T-cell (primary cell): ENCODE measurements at regions of chr17 and their contacts with region 1.

Region 1: DNA sequence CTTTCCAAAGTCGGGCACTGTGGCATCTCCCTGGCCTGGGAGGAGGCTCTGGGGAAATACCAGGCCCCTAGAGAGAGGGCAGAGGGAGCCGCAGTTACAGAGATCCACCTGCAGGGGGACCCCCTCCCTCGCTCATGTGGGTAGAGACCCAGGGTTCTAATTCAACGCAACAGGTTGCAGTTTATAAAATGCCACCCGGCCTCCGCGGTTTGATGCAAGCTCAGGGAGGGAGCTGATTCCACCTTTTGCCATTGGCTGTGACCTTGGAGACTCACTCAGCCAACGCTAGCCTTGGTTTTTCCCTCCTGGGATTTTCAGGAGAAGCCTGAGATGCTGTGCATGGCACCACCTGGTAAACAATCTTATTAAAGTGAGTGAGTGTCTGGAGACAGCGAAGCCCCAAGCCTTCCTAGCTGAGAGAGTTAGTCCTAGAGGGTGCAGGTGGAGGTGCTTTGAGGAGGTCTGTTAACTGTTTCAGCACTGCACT is 12.1 kb downstream of the TTLL6 start:
- DNase-seq: peak; percentile 14 to 77 (median 56)
- ATAC-seq: peak; percentile 71 to 84 (median 81)
- H3K4me3 ChIP-seq: no peak overlapping the region
- H3K4me3 Mint-ChIP-seq: no peak overlapping the region
- H3K27ac ChIP-seq: no peak overlapping the region
- H3K27ac Mint-ChIP-seq: no peak overlapping the region
- H3K4me1 ChIP-seq: peaks cover 0 to 4% of the 10 kb centered on the region in 2 experiments
- H3K4me1 Mint-ChIP-seq: peaks cover 0 to 2% (median 0%) of the 10 kb centered on the region in 3 donors
- H3K27me3 ChIP-seq: peaks cover 0 to 23% of the 10 kb centered on the region in 2 experiments
- H3K27me3 Mint-ChIP-seq: peaks cover 9 to 20% of the 10 kb centered on the region in 2 donors

Region 2: DNA sequence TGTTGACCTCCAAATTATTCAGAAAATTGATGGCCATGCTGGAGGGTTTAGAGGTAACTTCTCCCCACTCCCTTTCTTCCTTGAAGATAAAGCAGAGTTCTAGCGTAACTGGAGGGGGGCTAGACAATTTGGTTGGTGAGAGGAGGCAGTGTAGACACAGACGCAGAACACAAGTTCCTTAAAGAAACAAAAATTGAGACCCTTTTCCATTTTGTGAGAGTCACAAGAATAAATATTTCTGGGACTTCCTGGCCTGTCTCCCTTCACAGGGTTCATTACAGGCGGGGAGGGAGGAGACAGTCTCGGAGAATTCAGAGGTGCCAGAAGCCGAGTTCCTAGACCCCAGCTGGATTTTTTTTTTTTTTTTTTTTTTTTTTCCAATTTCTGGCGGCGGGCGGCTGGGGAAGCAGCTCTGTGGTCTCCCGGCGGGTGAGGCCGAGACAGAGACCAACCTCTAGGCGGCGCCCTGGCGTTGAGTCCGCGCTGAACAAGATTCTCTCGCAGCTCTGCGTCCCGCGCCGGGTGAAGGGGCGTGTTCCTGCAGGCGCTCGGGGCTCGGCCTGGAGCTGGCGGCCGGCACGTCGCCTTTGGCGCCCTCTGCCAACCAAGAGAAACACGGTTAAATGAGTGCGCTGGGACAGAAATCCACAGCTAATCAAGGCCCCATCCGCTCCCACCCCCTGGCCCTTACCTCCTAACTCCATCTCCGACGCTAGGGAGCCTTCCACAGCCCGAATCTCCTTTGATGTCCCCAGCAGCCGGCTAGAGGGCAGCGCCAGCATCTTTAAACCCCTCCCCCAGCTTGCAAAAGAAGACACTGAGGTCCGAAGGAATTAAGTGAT is 168.6 kb before region 1 on chr17:
- CTCF ChIA-PET with region 1: interaction called in 1 of 2 experiments, 10 read pairs
- POLR2A ChIA-PET with region 1: no interaction called
- DNase-seq: peak in 31 of 35 experiments; percentile 28 to 79 (median 60)
- ATAC-seq: peak; percentile 66 to 85 (median 80)
- H3K4me3 ChIP-seq: no peak overlapping the region
- H3K4me3 Mint-ChIP-seq: peak overlapping the region in 1 of 3 donors; percentile 49
- H3K27ac ChIP-seq: no peak overlapping the region
- H3K27ac Mint-ChIP-seq: no peak overlapping the region
- H3K4me1 ChIP-seq: peaks cover 0 to 20% of the 10 kb centered on the region in 2 experiments
- H3K4me1 Mint-ChIP-seq: peaks cover 13 to 20% (median 19%) of the 10 kb centered on the region in 3 donors
- H3K27me3 ChIP-seq: peaks cover 26 to 83% of the 10 kb centered on the region in 2 experiments
- H3K27me3 Mint-ChIP-seq: peaks cover 67 to 96% of the 10 kb centered on the region in 2 donors

Region 3: DNA sequence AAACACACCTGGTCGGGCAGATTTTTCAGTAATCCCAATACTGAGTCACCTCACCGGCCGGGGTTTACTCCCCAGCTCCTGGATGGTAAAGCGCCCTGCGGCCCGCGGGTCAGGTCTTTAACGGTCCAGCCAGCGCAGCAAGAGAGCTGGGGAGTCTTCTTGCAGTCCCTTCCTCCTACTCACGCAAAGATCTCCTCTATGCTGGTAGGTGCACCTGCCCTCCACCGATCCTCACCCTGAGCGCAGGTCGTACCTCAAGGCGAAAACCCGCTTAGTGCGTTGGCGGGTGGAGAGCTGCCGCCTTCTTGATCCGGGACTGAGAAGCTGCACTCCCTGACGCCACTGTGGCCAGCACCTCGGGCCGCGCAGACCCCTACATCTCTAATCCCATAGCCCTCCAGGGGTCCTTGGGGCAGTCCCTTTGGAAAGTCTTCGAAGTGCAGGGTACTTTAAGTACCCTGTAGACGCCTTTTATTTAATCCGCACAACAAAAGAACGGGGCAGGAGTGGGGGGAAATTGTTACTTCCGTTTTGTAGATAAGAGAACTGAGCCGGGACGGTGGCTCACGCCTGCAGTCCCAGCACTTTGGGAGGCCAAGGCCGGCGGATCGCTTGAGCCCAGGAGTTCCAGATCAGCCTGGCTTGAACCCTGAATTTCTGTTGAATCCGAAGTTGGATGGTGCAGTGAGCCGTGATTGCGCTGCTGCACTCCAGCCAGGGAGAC is 66.0 kb before region 1 on chr17:
- CTCF ChIA-PET with region 1: no interaction called
- POLR2A ChIA-PET with region 1: no interaction called
- DNase-seq: no peak
- ATAC-seq: peak in 3 of 4 experiments; percentile 24 to 42 (median 26)
- H3K4me3 ChIP-seq: peak overlapping the region in 1 of 2 donors; percentile 10
- H3K4me3 Mint-ChIP-seq: peak overlapping the region in 2 of 3 donors; percentile 50 to 52
- H3K27ac ChIP-seq: no peak overlapping the region
- H3K27ac Mint-ChIP-seq: peak overlapping the region in 1 of 2 donors; percentile 58
- H3K4me1 ChIP-seq: peaks cover 0 to 18% of the 10 kb centered on the region in 2 experiments
- H3K4me1 Mint-ChIP-seq: peaks cover 11 to 13% (median 12%) of the 10 kb centered on the region in 3 donors
- H3K27me3 ChIP-seq: peaks cover 18 to 90% of the 10 kb centered on the region in 2 experiments
- H3K27me3 Mint-ChIP-seq: peaks cover 80 to 95% of the 10 kb centered on the region in 2 donors

Region 4: GRCh38 chr17:48825446-48826381 is 20.7 kb after region 1 on chr17:
- CTCF ChIA-PET with region 1: no interaction called
- POLR2A ChIA-PET with region 1: interaction called in 1 of 2 experiments, 16 read pairs
- DNase-seq: no peak
- ATAC-seq: no peak
- H3K4me3 ChIP-seq: no peak overlapping the region
- H3K4me3 Mint-ChIP-seq: no peak overlapping the region
- H3K27ac ChIP-seq: no peak overlapping the region
- H3K27ac Mint-ChIP-seq: no peak overlapping the region
- H3K4me1 ChIP-seq: peaks cover 0 to 5% of the 10 kb centered on the region in 2 experiments
- H3K4me1 Mint-ChIP-seq: peaks cover 4 to 6% (median 6%) of the 10 kb centered on the region in 3 donors
- H3K27me3 ChIP-seq: peaks cover 0 to 21% of the 10 kb centered on the region in 2 experiments
- H3K27me3 Mint-ChIP-seq: peaks cover 4 to 5% of the 10 kb centered on the region in 2 donors

Region 5: GRCh38 chr17:48990882-48991357 is 186.0 kb after region 1 on chr17:
- CTCF ChIA-PET with region 1: no interaction called
- POLR2A ChIA-PET with region 1: no interaction called
- DNase-seq: no peak
- ATAC-seq: no peak
- H3K4me3 ChIP-seq: no peak overlapping the region
- H3K4me3 Mint-ChIP-seq: no peak overlapping the region
- H3K27ac ChIP-seq: no peak overlapping the region
- H3K27ac Mint-ChIP-seq: no peak overlapping the region
- H3K4me1 ChIP-seq: peaks cover 4 to 8% of the 10 kb centered on the region in 2 experiments
- H3K4me1 Mint-ChIP-seq: peaks cover 3 to 9% (median 6%) of the 10 kb centered on the region in 3 donors
- H3K27me3 ChIP-seq: peaks cover 14 to 36% of the 10 kb centered on the region in 2 experiments
- H3K27me3 Mint-ChIP-seq: peaks cover 42 to 55% of the 10 kb centered on the region in 2 donors